Dendritic cell treated with granulocyte-macrophage colony-stimulating factor and Interleukin-4, amounts not matched to agents 40 ng/mL and 50 ng/mL, for 4 days (primary cell): ENCODE measurements at regions of chrX and their contacts with region 1.

Region 1: DNA sequence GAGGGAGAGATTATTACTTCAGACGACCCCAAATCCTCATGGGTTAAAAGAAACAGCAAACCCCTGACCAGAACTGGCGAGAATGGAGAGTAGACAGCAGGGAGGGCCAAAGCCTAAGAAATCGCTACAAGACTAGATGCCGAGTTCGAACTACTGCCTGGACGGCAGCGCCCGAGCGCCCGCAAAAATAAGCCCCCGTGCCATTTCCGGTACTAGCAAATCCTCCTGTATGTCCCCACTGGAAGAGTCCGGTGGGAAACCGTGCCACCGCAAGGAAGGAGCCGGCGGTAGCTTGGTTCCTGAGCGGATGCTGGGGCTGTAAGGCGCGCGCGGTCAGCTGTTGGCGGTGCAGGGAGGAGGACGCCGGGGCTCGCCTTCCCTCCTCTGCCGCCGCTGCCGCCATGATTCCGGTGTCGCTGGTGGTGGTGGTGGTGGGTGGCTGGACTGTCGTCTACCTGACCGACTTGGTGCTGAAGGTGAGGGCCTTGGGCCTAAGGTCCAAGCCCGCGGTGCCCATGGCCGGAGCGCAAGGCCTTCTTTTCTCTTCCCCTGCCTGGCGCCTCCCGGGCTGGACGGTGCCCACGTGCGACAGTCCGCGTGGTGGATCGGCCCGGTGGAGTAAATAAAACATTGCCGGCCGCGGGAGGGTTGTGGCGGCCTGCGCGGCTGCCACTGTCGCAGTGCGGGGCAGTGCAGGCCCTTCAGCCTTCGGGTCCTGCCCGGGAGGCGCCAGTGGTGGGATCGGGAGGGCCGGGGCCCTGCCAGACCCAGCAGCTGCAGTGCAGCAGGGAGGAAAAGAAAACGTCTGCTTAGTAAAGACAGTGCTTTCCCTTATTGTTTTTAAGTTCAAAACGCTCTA is at the start of gene MBTPS2:
- H3K4me3 Mint-ChIP-seq: peak within 1 kb of the TSS; percentile 84
- H3K27ac Mint-ChIP-seq: peak within 1 kb of the TSS; percentile 93
- H3K4me1 Mint-ChIP-seq: no peaks in the 10 kb centered on the region
- H3K27me3 Mint-ChIP-seq: peaks cover 3% of the 10 kb centered on the region

Region 2: DNA sequence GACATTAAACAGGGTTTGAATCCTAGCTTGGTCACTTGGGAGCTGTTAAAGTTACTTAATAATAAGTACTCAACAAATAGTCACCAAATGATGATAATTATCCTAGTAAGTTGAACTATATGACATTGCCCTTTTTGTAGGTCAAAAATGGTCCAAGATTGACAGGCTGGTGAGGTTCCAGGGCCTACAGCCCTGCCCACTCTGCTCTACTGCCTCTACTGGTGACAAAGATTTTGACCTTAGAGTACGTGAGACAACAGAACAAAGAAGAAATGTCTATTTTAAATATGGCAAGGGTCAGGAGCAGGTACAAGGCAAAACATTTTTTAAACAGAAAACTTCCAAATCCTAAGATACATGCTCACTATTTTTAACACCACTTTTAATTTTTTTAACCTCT is 81.1 kb before region 1 on chrX:
- intact Hi-C with region 1: no loop called
- H3K4me3 Mint-ChIP-seq: no peak overlapping the region
- H3K27ac Mint-ChIP-seq: no peak overlapping the region
- H3K4me1 Mint-ChIP-seq: no peaks in the 10 kb centered on the region
- H3K27me3 Mint-ChIP-seq: no peaks in the 10 kb centered on the region

Region 3: DNA sequence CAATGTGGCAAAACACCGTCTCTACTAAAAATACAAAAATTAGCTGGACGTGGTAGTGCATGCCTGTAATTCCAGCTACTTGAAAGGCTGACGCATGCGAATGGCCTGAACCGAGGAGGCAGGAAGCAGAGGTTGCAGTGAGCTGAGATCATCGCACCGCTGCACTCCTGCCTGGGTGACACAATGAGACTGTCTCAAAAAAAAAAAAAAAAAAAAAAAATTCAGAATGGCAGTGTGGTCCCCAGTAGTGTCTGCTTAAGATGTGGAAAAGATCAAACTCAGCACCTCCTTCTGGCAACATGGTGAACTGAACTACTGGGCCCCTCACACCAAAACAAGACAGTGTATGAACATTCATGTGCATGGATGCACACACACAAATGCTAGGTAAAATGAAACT is 133.2 kb after region 1 on chrX:
- intact Hi-C with region 1: loop called (anchors 10 kb)
- H3K4me3 Mint-ChIP-seq: no peak overlapping the region
- H3K27ac Mint-ChIP-seq: no peak overlapping the region
- H3K4me1 Mint-ChIP-seq: no peaks in the 10 kb centered on the region
- H3K27me3 Mint-ChIP-seq: no peaks in the 10 kb centered on the region

Region 4: GRCh38 chrX:22192417-22193060 is 353.0 kb after region 1 on chrX:
- intact Hi-C with region 1: loop called (anchors 5 kb)
- H3K4me3 Mint-ChIP-seq: no peak overlapping the region
- H3K27ac Mint-ChIP-seq: no peak overlapping the region
- H3K4me1 Mint-ChIP-seq: peaks cover 5% of the 10 kb centered on the region
- H3K27me3 Mint-ChIP-seq: peaks cover 3% of the 10 kb centered on the region

Region 5: GRCh38 chrX:22748093-22748999 is 908.8 kb after region 1 on chrX:
- intact Hi-C with region 1: loop called (anchors 5 kb)
- H3K4me3 Mint-ChIP-seq: no peak overlapping the region
- H3K27ac Mint-ChIP-seq: no peak overlapping the region
- H3K4me1 Mint-ChIP-seq: no peaks in the 10 kb centered on the region
- H3K27me3 Mint-ChIP-seq: no peaks in the 10 kb centered on the region